ENCODE measurements at regions of chr11 and their contacts with region 1.

Region 1: GRCh38 chr11:63032457-63032856 is 16.8 kb upstream of the SLC22A8 start:
- DNase-seq: no peak
- H3K4me3 ChIP-seq: no peak overlapping the region
- H3K27ac ChIP-seq: no peak overlapping the region
- H3K4me1 ChIP-seq: no peaks in the 10 kb centered on the region
- H3K27me3 ChIP-seq: peaks cover 9% of the 10 kb centered on the region
- CTCF ChIP-seq: no peak

Region 2: DNA sequence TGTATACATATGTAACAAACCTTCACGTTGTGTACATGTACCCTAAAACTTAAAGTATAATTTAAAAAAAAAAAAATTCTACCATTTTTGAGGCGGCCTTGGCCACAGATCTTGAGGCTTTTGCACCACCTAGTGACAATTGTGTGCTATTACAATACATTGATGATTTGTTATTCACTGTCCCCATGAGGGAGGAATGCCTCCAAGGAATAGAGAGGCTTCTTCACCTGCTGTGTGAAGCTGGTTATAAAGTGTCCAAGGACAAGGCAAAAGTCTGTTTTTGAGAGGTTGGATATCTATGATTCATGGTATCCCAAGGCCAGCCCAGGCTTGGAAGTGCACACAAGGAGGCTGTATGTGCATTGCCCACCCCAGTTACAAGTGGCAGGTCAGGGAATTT is 180.3 kb after region 1 on chr11:
- CTCF ChIA-PET with region 1: interaction called, 8 read pairs
- POLR2A ChIA-PET with region 1: no interaction called
- intact Hi-C with region 1: loop called (anchors 1 kb)
- DNase-seq: peak; percentile 66
- H3K4me3 ChIP-seq: no peak overlapping the region
- H3K27ac ChIP-seq: no peak overlapping the region
- H3K4me1 ChIP-seq: no peaks in the 10 kb centered on the region
- H3K27me3 ChIP-seq: no peaks in the 10 kb centered on the region
- CTCF ChIP-seq: peak; percentile 76

Region 3: GRCh38 chr11:63277345-63277943 is 245.0 kb after region 1 on chr11:
- CTCF ChIA-PET with region 1: interaction called, 5 read pairs
- POLR2A ChIA-PET with region 1: no interaction called
- intact Hi-C with region 1: loop called (anchors 10 kb)
- DNase-seq: no peak
- H3K4me3 ChIP-seq: no peak overlapping the region
- H3K27ac ChIP-seq: no peak overlapping the region
- H3K4me1 ChIP-seq: no peaks in the 10 kb centered on the region
- H3K27me3 ChIP-seq: peaks cover 54% of the 10 kb centered on the region
- CTCF ChIP-seq: 0 out of 2 replicates have a peak, but pooled peaks have one; percentile 14